HEK293 (cell line): ENCODE measurements at regions of chr2 and their contacts with region 1.

Region 1: GRCh38 chr2:222468346-222468745 is 44.0 kb downstream of the SGPP2 start:
- H3K4me3 ChIP-seq: no peak overlapping the region
- H3K27ac ChIP-seq: no peak overlapping the region
- H3K4me1 ChIP-seq: peaks cover 14% of the 10 kb centered on the region
- CTCF ChIP-seq: no peak

Region 2: DNA sequence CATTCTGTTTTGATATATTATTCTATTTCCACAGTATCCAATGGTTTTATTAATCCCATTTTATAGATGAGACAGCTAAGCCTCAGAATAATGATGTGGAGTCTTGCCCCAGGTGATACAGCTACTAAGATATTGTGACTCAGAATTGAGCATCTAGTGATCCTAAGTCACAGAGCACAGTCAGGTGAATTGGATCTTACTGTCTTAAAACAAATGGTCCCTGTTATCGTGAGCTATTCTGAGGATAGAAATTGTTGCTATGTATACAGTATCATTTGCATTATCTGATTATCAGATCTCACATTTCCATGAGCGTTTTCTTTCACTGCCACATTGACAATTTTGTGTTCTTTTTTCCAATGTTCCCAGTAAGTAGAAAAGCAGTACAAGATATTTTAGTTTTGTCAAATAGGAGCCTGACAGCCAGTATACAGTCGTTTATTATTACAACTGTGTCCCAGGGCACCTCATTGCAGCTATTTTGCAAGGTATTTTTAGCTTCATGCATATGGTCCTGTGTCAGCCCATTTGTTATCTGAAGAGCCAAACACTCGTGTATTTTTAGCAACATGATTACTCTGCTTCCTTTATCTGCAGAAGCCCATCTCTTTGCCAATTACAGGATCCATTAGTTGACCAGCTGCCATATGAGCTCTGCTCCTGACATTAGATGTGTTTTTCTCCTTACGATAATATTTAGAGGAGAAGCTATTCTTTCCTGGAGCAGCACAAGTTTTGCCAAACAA is 69.1 kb before region 1 on chr2:
- CTCF ChIA-PET with region 1: no interaction called
- POLR2A ChIA-PET with region 1: interaction called, 10 read pairs
- H3K4me3 ChIP-seq: no peak overlapping the region
- H3K27ac ChIP-seq: no peak overlapping the region
- H3K4me1 ChIP-seq: no peaks in the 10 kb centered on the region
- CTCF ChIP-seq: no peak

Region 3: DNA sequence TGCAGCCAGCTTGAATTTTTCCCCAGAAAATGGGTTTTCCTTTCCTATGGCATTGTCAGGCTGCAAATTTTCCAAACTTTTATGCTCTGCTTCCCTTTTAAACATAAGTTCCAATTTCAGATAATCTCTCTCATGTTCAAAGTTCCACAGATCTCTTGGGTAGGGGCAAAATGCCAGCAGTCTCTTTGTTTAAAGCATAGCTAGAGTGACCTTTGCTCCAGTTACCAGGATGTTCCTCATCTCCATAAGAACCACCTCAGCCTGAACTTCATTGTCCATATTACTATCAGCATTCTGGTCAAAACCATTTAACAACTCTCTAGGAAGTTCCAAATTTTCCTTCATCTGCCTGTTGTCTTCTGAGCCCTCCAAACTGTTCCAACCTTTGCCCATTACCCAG is 24.3 kb after region 1 on chr2:
- CTCF ChIA-PET with region 1: no interaction called
- POLR2A ChIA-PET with region 1: no interaction called
- H3K4me3 ChIP-seq: no peak overlapping the region
- H3K27ac ChIP-seq: no peak overlapping the region
- H3K4me1 ChIP-seq: no peaks in the 10 kb centered on the region
- CTCF ChIP-seq: no peak